ENCODE measurements at regions of chr3 and their contacts with region 1.

Region 1: DNA sequence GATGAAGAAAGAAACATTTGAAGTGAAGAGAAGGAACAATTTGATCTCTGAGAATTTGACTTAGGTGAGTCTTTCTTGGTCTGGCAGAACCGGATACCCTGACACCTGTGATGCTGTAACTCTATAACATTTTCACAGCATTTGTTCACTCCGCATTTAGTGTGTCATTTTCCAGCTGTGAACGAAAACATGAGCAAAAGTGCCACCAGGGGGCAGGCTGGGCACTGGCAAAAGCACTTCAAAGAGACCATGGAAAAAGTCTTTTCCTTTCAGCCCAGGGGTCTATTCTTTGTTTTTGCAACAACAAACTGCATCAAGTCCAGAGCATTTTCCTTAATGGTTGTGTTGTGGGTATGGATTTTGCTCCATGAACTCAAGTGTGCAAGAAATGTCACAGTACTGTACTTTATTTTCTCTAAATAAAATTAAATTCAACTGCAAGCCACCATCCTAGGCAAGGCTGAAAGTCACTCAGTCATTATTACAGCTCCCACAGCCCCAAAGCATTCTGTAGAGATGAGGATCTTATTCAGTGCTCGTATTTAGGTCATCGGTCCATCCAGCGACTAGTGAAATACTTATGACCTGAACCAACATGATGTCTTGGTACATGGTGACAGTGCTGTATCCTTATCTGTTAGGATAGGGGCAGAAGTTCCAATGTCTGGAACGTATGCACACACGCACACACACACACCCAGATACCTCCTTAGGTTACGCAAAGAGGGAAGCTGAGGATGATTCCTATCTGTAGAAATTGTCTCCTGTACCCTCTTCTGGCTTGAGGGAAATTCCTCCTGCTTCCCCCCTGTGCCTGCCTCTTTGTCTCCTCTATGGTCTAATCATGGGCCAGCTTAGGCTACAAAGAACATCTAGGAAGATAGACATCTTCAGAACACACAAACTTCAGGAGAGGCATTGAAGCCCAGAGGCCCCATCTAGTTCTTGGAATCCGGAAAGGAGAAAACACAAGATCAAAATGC is 125.5 kb downstream of the GADL1 start:
- DNase-seq: peak; percentile 54 to 80 (median 61)
- ATAC-seq: peak in 1 of 4 donors; percentile 47
- H3K4me3 ChIP-seq: no peak overlapping the region
- H3K27ac ChIP-seq: no peak overlapping the region
- H3K4me1 ChIP-seq: peaks cover 0 to 5% (median 0%) of the 10 kb centered on the region in 12 donors
- H3K27me3 ChIP-seq: no peaks in the 10 kb centered on the region
- CTCF ChIP-seq: peak; percentile 68 to 87 (median 80)
- POLR2A ChIP-seq: no peak

Region 2: DNA sequence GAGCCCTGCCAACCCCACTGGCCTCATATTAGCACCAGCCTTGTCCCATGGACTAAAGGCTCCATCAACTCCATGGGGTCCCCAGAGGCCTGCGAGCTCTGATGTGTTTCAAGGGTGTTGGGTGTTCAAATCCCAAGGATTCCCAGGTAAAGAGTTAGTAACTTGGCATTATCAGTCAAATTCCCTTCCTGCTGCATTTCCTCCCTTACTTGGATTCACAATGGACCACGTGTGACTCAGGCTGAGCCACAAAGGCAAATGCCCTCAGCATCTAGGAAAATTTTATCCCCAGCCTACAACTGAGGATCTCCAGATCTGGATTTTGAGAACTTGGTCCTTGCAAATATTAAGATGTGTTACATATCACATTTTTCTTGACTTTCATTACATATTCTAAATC is 66.7 kb after region 1 on chr3:
- intact Hi-C with region 1: loop called in 1 of 10 experiments (anchors 2 kb)
- DNase-seq: no peak
- ATAC-seq: no peak
- H3K4me3 ChIP-seq: no peak overlapping the region
- H3K27ac ChIP-seq: no peak overlapping the region
- H3K4me1 ChIP-seq: no peaks in the 10 kb centered on the region
- H3K27me3 ChIP-seq: no peaks in the 10 kb centered on the region
- CTCF ChIP-seq: no peak
- POLR2A ChIP-seq: no peak

Region 3: DNA sequence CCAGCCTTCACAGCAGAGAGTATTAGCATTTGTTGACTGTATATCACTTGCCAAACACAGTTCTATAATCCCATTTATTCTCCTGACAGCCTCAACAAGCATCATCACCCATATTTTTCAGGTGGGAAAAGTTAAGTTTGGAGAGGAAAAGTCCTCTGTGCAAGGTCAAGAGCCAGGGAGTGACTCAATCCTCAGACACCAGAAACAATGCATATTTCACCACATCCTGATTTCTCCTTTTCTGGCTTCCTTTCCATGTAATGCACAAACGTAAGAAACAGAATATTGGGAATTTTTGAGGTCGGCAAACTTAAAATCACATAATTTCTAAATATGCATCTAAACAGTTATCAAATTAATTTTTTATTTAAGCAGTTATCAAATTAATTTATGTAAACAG is 241.5 kb after region 1 on chr3:
- intact Hi-C with region 1: loop called in 4 of 10 experiments (anchors 10 kb)
- DNase-seq: no peak
- ATAC-seq: no peak
- H3K4me3 ChIP-seq: no peak overlapping the region
- H3K27ac ChIP-seq: no peak overlapping the region
- H3K4me1 ChIP-seq: peaks cover 0 to 10% (median 0%) of the 10 kb centered on the region in 12 donors
- H3K27me3 ChIP-seq: no peaks in the 10 kb centered on the region
- CTCF ChIP-seq: peak in 1 of 12 donors; percentile 3
- POLR2A ChIP-seq: no peak

Region 4: DNA sequence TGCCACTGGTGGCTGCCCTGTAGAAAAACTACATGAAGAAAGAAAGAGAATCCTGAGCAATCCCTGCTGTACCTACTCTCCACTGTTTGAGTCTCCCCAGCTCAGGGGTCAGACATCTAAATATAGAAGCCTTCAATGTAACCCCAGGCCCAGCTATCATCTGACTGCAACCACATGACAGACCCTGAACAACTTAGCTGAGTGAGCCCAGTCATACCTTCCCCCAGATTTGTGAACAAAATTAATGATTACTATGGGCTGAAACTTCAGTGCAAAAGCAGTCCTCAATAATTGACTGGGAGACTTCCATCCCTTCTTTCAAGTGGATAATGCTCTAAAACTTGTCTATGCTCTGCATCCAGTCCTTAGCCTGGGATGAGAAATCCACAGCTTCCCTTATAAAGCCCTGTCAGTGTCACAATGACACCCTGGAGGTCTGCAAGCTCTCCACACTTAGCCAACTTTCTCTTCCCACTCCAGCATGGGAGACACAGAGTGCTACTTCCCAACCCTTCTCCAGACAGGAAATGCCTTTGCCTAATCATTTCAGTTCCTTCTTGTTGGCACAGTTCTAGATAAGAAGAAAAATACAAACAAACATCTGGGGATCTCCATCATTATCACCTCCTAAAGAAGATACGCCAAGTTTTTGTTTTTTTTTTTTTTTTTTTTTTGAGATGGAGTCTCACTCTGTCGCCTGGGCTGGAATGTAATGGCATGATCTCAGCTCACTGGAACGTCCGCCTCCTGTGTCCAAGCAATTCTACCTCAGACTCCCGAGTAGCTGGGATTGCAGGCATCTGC is 324.0 kb after region 1 on chr3:
- intact Hi-C with region 1: no loop called
- DNase-seq: peak in 2 of 5 donors; percentile 11 to 33
- ATAC-seq: peak; percentile 42 to 78 (median 64)
- H3K4me3 ChIP-seq: no peak overlapping the region
- H3K27ac ChIP-seq: no peak overlapping the region
- H3K4me1 ChIP-seq: peaks cover 0 to 19% (median 0%) of the 10 kb centered on the region in 12 donors
- H3K27me3 ChIP-seq: no peaks in the 10 kb centered on the region
- CTCF ChIP-seq: no peak
- POLR2A ChIP-seq: no peak

Region 5: DNA sequence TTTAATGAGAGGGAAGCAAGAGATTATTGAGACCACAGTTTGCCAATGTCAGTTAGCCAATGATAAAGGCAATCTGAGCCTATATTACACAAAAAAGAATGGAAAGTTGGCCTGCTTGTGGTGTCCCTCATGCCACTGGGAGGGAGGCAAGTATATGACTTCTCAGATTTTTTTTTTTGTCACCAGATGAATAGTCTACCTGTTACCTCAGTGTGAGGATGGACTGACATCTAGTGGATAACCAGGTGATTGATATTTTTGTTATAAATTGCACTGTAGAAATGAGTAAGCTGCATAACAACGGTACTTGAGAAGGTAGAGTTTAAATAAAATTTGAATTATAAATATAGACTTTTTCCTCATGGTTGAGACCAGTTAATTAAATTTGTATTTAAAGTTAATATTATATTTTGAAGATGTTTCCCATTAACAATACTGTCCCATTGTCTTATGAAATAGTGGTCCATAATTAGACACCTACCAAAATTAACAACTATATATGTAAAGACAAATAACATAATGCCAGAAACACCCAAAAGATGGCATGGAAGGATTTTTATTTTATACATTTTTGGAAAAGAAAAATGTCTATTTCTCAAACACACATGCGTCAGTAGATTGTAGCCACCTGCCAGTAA is 363.3 kb after region 1 on chr3:
- intact Hi-C with region 1: loop called in 9 of 10 experiments (anchors 1 to 5 kb)
- DNase-seq: no peak
- ATAC-seq: peak in 2 of 4 donors; percentile 52 to 61
- H3K4me3 ChIP-seq: no peak overlapping the region
- H3K27ac ChIP-seq: no peak overlapping the region
- H3K4me1 ChIP-seq: no peaks in the 10 kb centered on the region
- H3K27me3 ChIP-seq: no peaks in the 10 kb centered on the region
- CTCF ChIP-seq: peak in 11 of 12 donors; percentile 32 to 74 (median 62)
- POLR2A ChIP-seq: no peak

Region 6: DNA sequence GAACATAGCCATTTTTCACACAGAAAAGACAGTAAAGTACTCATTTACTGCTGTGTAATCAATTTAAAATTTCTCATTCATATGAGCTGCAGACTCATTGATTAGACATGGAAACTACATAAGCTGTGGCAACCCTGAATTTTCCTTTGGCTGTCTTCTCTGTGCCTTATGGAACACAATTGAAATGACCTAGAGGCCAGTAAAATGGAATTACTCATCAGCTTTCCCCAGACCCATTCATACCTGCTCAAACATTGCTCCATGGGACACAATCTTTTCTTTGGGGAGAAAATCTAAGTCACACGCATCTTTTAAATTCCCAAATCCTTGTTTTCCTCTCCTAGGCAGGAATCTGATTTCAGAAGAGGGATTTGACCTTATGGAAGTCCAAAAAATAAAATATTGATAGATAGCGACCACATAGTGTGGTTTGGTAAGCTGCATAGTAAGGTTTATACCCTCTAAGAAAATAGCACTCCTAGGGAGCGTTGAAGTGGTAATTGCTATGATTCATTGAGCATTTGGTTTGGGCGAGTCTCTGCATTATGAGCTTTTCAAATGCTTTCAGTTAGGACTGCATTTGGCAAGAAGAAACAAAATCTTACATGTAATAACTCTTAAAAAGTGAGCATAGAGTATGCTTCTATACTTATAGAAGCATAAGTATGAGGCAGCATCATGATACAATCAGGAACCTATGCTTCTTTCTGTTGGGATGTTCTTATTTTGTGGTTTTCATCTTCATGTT is 368.9 kb after region 1 on chr3:
- intact Hi-C with region 1: loop called in 5 of 10 experiments (anchors 2 to 5 kb)
- DNase-seq: no peak
- ATAC-seq: no peak
- H3K4me3 ChIP-seq: no peak overlapping the region
- H3K27ac ChIP-seq: no peak overlapping the region
- H3K4me1 ChIP-seq: no peaks in the 10 kb centered on the region
- H3K27me3 ChIP-seq: no peaks in the 10 kb centered on the region
- CTCF ChIP-seq: no peak
- POLR2A ChIP-seq: no peak

Region 7: DNA sequence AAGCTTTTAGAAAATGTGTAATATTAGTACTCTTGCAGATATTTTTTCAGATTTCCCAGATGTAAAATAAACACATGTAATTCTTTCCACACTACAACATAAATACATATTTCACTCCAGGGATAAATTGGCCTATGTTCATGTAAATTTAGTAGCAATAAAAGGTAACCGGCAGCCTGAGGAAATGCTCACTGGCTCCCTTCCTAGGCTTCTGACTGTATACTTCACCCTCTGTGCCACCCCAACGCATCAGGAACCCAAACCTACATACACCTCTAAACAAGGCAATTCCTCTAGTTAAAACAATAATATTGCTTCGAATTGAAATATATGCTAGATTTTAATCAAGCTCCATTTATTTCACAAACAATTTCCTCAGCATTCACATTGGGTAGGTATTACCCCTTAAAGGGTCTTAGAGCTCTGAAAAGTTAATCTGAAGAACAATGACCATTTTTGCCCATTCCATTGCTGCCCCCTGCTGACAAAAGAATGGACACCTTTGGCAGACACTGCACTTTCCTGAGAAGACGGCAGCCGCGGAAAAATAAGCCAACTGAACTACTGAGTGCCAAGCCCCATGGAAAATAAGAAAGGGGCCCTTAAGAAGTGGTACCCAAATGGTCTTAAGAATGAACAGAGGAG is 999.6 kb after region 1 on chr3:
- intact Hi-C with region 1: loop called in 5 of 10 experiments (anchors 5 to 10 kb)
- DNase-seq: peak in 4 of 5 donors; percentile 43 to 62 (median 56)
- ATAC-seq: peak; percentile 62 to 74 (median 68)
- H3K4me3 ChIP-seq: no peak overlapping the region
- H3K27ac ChIP-seq: no peak overlapping the region
- H3K4me1 ChIP-seq: peaks cover 0 to 7% (median 0%) of the 10 kb centered on the region in 12 donors
- H3K27me3 ChIP-seq: no peaks in the 10 kb centered on the region
- CTCF ChIP-seq: peak; percentile 57 to 82 (median 68)
- POLR2A ChIP-seq: no peak